Activated CD4-positive, alpha-beta T cell treated with anti-CD3 and anti-CD28 coated beads for 36 hours (primary cell): ENCODE measurements at regions of chr3 and their contacts with region 1.

Region 1: DNA sequence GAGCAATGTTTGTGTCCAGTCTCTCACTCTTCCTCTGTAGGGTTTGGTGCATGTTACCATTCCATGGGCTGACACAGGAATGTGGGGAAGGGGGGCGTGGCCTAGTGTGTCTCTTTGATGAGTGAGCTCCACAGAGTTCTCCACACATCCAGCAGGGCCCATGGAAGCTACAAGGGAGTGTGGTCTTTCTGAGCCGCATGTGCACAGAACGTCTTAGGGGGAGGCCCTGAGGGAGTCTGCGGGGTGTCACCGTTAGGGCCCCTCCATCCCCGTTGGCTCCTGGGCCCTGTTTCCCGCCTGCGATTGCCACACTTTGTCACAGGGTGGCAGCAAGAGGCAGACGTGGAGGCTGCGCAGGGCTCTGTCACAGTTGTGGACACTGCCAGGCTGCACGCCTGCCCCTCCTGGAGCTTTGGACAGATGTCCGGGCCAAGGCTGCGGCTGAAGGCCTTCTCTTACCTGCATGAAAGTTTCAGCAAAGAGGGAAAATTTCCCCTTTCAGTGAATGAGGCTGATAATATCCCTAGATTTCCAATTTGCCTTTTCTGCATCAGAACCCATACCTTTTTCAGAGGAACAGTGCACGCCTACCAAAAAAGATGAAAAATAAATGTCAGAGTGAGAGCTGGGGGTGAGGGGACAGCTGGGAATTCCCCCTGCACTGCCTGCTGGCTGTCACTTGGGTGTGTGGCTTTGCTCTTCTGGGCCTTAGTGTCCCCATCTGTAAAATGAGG is 24.3 kb downstream of the CACNA2D3 start:
- DNase-seq: peak; percentile 33
- ATAC-seq: no peak
- H3K4me3 Mint-ChIP-seq: no peak overlapping the region
- H3K27ac Mint-ChIP-seq: no peak overlapping the region
- H3K4me1 Mint-ChIP-seq: no peaks in the 10 kb centered on the region
- H3K27me3 Mint-ChIP-seq: peaks cover 11% of the 10 kb centered on the region

Region 2: GRCh38 chr3:54374214-54374855 is 227.7 kb after region 1 on chr3:
- CTCF ChIA-PET with region 1: no interaction called
- POLR2A ChIA-PET with region 1: no interaction called
- intact Hi-C with region 1: loop called in 1 of 2 experiments (anchors 2 kb)
- DNase-seq: peak; percentile 38
- ATAC-seq: no peak
- H3K4me3 Mint-ChIP-seq: no peak overlapping the region
- H3K27ac Mint-ChIP-seq: no peak overlapping the region
- H3K4me1 Mint-ChIP-seq: no peaks in the 10 kb centered on the region
- H3K27me3 Mint-ChIP-seq: no peaks in the 10 kb centered on the region